IMR-90 (cell line): ENCODE measurements at regions of chr6 and their contacts with region 1.

Region 1: DNA sequence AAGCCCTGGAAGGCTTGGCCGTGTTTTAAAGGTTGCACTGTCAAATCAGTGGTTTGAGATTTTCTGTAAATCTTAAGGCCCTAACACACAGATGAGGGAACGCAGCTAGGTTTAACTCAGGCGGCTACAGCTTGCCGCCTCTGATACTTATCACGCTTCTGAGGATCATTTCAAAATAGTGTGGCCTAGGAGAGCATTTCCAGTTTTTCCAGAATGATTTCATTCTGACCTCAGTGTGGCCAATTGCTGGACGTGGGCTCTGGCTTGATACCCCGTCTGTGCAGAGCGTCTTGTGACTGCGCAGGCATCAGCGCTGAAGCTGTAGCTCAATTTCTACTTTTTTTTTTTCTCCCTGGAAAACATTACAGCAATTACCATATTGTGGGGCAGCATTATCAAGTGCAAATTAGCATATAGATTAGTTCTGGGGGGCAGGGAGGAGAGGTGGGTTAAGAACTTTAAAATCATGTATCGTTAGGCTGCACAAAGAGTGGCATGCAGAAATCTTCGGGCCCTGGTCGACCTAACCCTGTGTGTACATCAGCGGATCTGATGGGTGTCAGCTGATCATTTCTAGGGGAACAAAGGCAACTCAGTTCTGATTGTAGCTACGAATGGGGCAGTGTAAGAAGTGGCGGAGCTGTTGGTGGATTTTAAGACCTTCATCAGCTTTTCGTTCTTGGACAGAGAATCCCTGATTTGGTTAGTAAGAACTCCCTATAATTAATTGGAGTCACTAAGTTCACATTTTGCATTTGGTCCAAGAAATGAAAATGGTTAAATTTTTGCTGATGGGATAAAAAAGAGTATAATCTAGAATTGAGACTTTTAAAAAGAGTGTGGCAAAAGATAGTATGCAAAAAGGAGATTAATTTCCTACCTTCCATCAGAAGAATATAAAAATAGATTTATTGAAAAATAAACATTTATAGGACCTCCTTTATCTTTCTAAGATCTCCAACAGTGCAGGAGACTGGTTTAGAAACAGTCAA is 105.1 kb upstream of the EEF1E1 start:
- DNase-seq: no peak
- ATAC-seq: no peak
- H3K4me3 ChIP-seq: no peak overlapping the region
- H3K27ac ChIP-seq: no peak overlapping the region
- H3K4me1 ChIP-seq: no peaks in the 10 kb centered on the region
- H3K27me3 ChIP-seq: peaks cover 9% of the 10 kb centered on the region
- CTCF ChIP-seq: no peak
- POLR2A ChIP-seq: no peak
- RAD21 ChIP-seq: no peak

Region 2: DNA sequence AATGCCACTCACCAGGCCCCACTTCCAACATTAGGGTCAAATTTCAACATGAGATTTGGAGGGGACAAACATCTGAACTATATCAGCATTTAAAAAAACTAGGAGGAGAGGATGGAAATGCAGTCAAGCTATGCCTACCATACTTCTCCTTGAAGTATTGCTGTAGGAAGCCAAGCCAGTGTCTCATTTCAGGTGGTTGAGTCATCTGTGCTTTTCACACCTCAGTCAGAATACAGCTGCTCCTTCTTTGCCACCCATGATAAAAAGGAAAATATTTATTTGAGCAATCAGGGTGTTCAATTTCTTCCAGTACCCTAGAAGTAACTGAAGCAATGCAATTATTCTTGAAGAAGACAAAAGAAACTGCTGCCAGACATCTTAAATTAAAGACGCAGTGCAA is 58.1 kb before region 1 on chr6:
- CTCF ChIA-PET with region 1: no interaction called
- POLR2A ChIA-PET with region 1: interaction called, 11 read pairs
- dilution Hi-C with region 1: no loop called
- in situ Hi-C with region 1: no loop called
- intact Hi-C with region 1: no loop called
- DNase-seq: no peak
- ATAC-seq: no peak
- H3K4me3 ChIP-seq: no peak overlapping the region
- H3K27ac ChIP-seq: no peak overlapping the region
- H3K4me1 ChIP-seq: no peaks in the 10 kb centered on the region
- H3K27me3 ChIP-seq: peaks cover 7% of the 10 kb centered on the region; the same call in 1 of the 2 replicates
- CTCF ChIP-seq: no peak
- POLR2A ChIP-seq: no peak
- RAD21 ChIP-seq: no peak

Region 3: DNA sequence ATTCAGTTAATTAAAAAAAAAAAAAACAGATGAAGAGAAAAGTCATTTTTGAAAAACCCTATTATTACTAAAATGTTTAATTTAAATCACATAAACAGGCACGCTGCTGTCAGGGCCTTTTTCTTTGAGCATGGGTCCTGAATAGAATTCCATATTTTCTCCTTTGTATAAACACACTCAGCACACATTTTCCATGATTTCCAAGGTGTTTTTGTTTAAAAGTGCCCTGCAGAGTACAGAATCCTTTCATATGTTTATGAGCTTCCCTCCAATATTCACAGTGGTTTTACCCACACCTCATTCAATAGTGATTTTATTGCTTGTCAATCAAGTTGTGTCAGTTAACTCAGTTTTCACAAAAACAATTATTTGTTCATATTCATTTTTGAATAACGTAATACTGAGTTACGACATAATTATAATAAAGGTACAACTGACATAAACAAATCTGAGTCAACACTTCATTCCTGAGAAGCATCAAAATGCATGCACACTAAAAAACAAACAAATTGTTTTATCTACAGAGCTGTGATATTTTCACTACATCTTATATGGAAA is 212.6 kb after region 1 on chr6:
- CTCF ChIA-PET with region 1: no interaction called
- POLR2A ChIA-PET with region 1: no interaction called
- dilution Hi-C with region 1: no loop called
- in situ Hi-C with region 1: no loop called
- intact Hi-C with region 1: no loop called
- DNase-seq: no peak
- ATAC-seq: no peak
- H3K4me3 ChIP-seq: no peak overlapping the region
- H3K27ac ChIP-seq: no peak overlapping the region
- H3K4me1 ChIP-seq: no peaks in the 10 kb centered on the region
- H3K27me3 ChIP-seq: no peaks in the 10 kb centered on the region
- CTCF ChIP-seq: no peak
- POLR2A ChIP-seq: no peak
- RAD21 ChIP-seq: no peak